A673 (cell line): ENCODE measurements at regions of chr13 and their contacts with region 1.

Region 1: DNA sequence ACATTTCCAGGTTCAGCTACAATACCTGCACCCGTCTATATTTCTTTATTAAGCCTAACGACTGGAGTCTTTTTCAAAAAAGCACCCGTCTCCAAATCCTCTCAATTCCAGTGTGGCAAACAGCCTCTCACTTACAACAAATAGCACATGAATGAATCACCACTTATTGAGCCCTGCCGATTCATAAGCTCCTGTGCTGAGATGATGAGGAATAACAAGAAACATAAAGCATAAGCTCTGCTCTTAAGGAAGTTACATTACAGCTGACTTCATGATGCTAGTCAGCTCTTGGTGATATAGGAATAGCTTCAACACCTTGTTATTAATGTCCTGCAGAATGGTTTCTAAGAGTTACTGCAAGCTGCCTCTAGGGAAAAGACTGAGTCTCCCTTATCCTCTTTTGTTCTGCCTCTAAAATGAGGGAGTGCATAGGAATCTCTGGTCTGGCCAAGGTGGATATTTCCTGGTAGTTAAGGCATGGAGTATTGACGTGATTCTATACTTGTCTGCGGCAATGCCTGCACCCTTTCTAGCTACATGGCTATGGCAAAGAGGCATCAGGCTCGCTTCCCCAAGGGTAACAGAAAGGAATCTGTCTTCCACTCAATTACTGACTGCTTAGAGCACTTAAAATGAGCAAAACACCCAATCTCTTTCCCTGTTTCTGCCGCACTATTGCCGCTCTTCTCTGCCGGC is 195.7 kb downstream of the KLF12 start:
- DNase-seq: peak; percentile 74
- H3K4me3 ChIP-seq: no peak overlapping the region
- H3K27ac ChIP-seq: no peak overlapping the region
- H3K4me1 ChIP-seq: peaks cover 36% of the 10 kb centered on the region
- H3K27me3 ChIP-seq: no peaks in the 10 kb centered on the region
- CTCF ChIP-seq: no peak

Region 2: DNA sequence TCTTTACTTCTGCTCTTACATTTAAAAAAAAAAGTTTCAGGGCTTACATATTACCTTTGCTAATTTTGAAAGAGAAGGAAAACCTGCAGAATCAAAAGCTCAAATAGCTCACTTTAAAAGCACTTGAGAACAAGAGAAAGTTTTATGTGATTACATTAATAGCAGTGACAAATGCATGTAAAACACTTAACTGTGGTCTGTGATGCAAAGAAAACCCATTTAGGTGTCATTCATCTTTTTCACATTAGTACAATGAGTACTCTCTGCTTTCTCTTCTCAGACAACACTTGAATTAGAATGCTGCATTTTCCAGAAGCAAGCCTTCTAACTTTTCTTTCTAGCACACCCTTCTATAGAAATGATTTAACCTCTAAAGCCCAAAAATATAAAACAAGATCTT is 418.8 kb before region 1 on chr13:
- CTCF ChIA-PET with region 1: no interaction called
- POLR2A ChIA-PET with region 1: no interaction called
- intact Hi-C with region 1: no loop called
- DNase-seq: no peak
- H3K4me3 ChIP-seq: no peak overlapping the region
- H3K27ac ChIP-seq: no peak overlapping the region
- H3K4me1 ChIP-seq: no peaks in the 10 kb centered on the region
- H3K27me3 ChIP-seq: no peaks in the 10 kb centered on the region
- CTCF ChIP-seq: no peak

Region 3: GRCh38 chr13:73765651-73766384 is 172.7 kb before region 1 on chr13:
- CTCF ChIA-PET with region 1: no interaction called
- POLR2A ChIA-PET with region 1: no interaction called
- intact Hi-C with region 1: loop called (anchors 10 kb)
- DNase-seq: peak; percentile 98
- H3K4me3 ChIP-seq: peak overlapping the region; percentile 15
- H3K27ac ChIP-seq: peak overlapping the region; percentile 89
- H3K4me1 ChIP-seq: peaks cover 56% of the 10 kb centered on the region
- H3K27me3 ChIP-seq: no peaks in the 10 kb centered on the region
- CTCF ChIP-seq: 0 out of 2 replicates have a peak, but pooled peaks have one; percentile 13